Activated T-helper 1 cell treated with anti-CD3 and anti-CD28 coated beads, Interleukin-12 subunit alpha, Interleukin-12 subunit beta, Interleukin-2, Interleukin-4 antibody, amounts not matched to agents 30 ng/mL and 10 ng/mL and 1 ng/mL, durations not matched to agents 14 hours and 24 hours and 36 hours (primary cell): ENCODE measurements at regions of chr5 and their contacts with region 1.

Region 1: GRCh38 chr5:172106511-172107356 is 81.3 kb downstream of the STK10 start:
- DNase-seq: peak; percentile 40
- H3K4me3 Mint-ChIP-seq: no peak overlapping the region
- H3K27ac Mint-ChIP-seq: peak overlapping the region; percentile 34
- H3K4me1 Mint-ChIP-seq: peaks cover 45% of the 10 kb centered on the region
- H3K27me3 Mint-ChIP-seq: no peaks in the 10 kb centered on the region

Region 2: GRCh38 chr5:172052450-172053236 is 54.1 kb before region 1 on chr5:
- intact Hi-C with region 1: no loop called
- DNase-seq: no peak
- H3K4me3 Mint-ChIP-seq: no peak overlapping the region
- H3K27ac Mint-ChIP-seq: no peak overlapping the region
- H3K4me1 Mint-ChIP-seq: peaks cover 24% of the 10 kb centered on the region
- H3K27me3 Mint-ChIP-seq: no peaks in the 10 kb centered on the region

Region 3: DNA sequence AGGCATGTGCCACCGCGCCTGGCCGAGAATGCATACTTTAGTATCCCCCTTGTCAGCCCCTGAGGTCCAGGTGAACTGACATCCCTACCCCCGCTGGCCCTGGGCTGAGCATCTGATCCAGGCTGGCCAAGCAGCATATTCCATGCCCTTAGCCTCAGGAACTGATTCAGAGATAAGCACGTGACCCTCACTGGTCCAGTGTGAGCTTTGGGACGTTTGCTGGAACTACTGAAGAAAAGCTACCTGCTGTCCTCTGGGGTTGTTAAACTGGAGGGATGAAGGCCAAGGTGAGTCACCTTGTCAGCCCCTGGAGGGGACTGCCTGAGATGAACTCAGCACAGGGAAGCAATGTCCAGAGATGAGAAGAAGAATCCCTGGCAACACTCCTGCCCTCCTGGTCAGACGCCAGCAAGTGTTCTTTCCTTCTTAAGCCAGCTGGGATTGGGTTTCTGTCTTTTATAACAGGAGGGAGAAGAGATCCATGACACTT is 41.2 kb before region 1 on chr5:
- intact Hi-C with region 1: loop called (anchors 1 kb)
- DNase-seq: no peak
- H3K4me3 Mint-ChIP-seq: no peak overlapping the region
- H3K27ac Mint-ChIP-seq: no peak overlapping the region
- H3K4me1 Mint-ChIP-seq: peaks cover 47% of the 10 kb centered on the region
- H3K27me3 Mint-ChIP-seq: no peaks in the 10 kb centered on the region

Region 4: GRCh38 chr5:172173831-172174153 is 67.1 kb after region 1 on chr5:
- intact Hi-C with region 1: loop called (anchors 1 kb)
- DNase-seq: peak; percentile 74
- H3K4me3 Mint-ChIP-seq: peak overlapping the region; percentile 87
- H3K27ac Mint-ChIP-seq: peak overlapping the region; percentile 100
- H3K4me1 Mint-ChIP-seq: peaks cover 83% of the 10 kb centered on the region
- H3K27me3 Mint-ChIP-seq: no peaks in the 10 kb centered on the region

Region 5: GRCh38 chr5:172223901-172224873 is 117.5 kb after region 1 on chr5:
- intact Hi-C with region 1: loop called (anchors 1 kb)
- DNase-seq: no peak
- H3K4me3 Mint-ChIP-seq: no peak overlapping the region
- H3K27ac Mint-ChIP-seq: peak overlapping the region; percentile 87
- H3K4me1 Mint-ChIP-seq: peaks cover 28% of the 10 kb centered on the region
- H3K27me3 Mint-ChIP-seq: peaks cover 5% of the 10 kb centered on the region

Region 6: DNA sequence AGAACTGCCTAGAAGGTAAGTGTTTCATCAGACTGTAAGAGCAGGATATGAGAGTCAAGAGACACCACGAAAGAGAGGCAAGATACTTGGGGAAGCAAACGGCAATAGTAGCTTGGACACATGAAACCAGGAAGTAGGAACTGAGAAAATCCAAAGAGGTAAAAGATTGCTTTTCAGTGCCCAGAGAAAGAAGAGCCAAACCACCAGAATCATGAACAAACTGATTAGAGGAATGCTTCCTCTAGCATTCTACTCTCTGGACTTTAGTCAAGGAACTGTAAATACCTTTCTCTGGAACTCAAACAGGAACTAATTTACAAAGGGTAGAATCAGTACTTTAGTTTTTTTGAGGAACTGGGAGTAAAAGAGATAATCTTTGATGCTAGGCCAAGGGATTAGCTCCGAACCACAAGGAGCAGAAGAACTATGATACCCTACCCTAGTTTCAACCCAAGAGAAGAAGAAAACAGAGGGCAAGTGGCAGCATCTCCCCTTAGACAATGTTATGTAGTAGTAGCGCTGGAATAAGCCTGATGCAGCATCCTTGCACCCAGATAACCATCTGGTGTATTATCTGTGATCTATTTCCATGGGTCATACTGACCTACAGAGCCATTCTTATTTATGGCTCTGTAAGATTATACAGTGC is 128.5 kb after region 1 on chr5:
- intact Hi-C with region 1: loop called (anchors 5 kb)
- DNase-seq: no peak
- H3K4me3 Mint-ChIP-seq: no peak overlapping the region
- H3K27ac Mint-ChIP-seq: no peak overlapping the region
- H3K4me1 Mint-ChIP-seq: peaks cover 45% of the 10 kb centered on the region
- H3K27me3 Mint-ChIP-seq: peaks cover 2% of the 10 kb centered on the region

Region 7: GRCh38 chr5:172293054-172293744 is 186.5 kb after region 1 on chr5:
- intact Hi-C with region 1: loop called (anchors 1 kb)
- DNase-seq: peak; percentile 51
- H3K4me3 Mint-ChIP-seq: no peak overlapping the region
- H3K27ac Mint-ChIP-seq: no peak overlapping the region
- H3K4me1 Mint-ChIP-seq: peaks cover 5% of the 10 kb centered on the region
- H3K27me3 Mint-ChIP-seq: peaks cover 27% of the 10 kb centered on the region

Region 8: DNA sequence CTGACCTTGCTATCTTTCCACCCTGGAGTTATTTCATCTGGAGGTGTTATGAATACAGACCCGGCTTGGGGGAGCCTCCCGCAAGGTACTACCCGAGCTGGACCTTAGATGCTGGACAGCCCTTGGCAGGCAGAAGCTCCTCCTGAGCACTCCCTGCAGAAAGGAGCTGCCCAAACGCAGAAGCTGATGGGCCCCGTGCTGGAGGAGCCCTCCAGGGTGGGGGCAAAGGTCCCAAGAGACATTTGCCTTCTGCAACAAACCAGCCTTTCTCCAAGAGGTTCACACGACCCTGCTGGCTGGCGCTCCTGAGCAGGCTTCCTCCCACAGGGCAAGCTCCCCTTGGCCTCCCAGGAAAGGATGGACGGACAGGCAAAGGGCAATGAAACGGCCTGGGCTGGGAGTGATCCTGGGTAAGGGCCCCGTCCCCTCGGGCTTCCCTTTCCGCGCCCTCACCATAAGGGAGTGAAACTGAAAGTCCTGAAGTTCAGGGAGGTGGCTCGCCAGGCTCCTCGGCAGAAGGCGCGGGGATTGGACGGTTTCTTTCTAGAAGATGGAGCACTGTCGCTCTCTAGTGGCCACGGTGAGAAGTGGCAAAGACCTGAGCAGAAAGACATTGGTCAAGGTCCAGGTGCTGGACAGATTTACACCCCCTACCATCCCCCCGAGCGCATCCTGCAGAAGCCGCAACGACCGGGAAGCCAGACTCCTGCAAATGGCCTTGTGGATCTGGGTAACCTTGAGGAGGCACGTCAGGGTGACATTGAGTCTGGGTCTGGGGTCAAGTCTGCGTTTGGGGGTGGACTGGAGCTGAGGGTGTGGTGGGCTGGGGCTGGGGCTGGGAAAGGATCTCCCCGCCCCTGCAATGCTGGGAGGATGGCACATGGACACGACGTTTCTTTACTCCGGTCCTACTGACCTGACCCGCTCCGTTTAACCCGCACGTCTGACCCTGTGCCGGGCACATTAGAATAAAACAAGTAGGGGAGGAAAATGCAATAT is 590.7 kb after region 1 on chr5:
- intact Hi-C with region 1: loop called (anchors 5 kb)
- DNase-seq: peak; percentile 75
- H3K4me3 Mint-ChIP-seq: peak overlapping the region; percentile 82
- H3K27ac Mint-ChIP-seq: peak overlapping the region; percentile 45
- H3K4me1 Mint-ChIP-seq: peaks cover 22% of the 10 kb centered on the region
- H3K27me3 Mint-ChIP-seq: peaks cover 24% of the 10 kb centered on the region